Transverse colon (tissue), 4 donors: ENCODE measurements at regions of chr12 and their contacts with region 1.

Region 1: GRCh38 chr12:69966409-69967207 is 141.6 kb downstream of the MYRFL start:
- DNase-seq: peak; percentile 27
- H3K4me3 ChIP-seq: no peak overlapping the region
- H3K27ac ChIP-seq: no peak overlapping the region
- H3K4me1 ChIP-seq: no peaks in the 10 kb centered on the region
- H3K27me3 ChIP-seq: no peaks in the 10 kb centered on the region
- CTCF ChIP-seq: no peak
- EP300 ChIP-seq: no peak
- POLR2A ChIP-seq: no peak

Region 2: GRCh38 chr12:70052931-70053497 is 86.4 kb after region 1 on chr12:
- in situ Hi-C with region 1: no loop called
- intact Hi-C with region 1: no loop called
- DNase-seq: peak; percentile 59
- H3K4me3 ChIP-seq: no peak overlapping the region
- H3K27ac ChIP-seq: peak overlapping the region in 3 of 4 donors; percentile 16 to 23 (median 18)
- H3K4me1 ChIP-seq: peaks cover 0 to 37% (median 14%) of the 10 kb centered on the region in 4 donors
- H3K27me3 ChIP-seq: no peaks in the 10 kb centered on the region
- CTCF ChIP-seq: no peak
- EP300 ChIP-seq: no peak
- POLR2A ChIP-seq: no peak

Region 3: DNA sequence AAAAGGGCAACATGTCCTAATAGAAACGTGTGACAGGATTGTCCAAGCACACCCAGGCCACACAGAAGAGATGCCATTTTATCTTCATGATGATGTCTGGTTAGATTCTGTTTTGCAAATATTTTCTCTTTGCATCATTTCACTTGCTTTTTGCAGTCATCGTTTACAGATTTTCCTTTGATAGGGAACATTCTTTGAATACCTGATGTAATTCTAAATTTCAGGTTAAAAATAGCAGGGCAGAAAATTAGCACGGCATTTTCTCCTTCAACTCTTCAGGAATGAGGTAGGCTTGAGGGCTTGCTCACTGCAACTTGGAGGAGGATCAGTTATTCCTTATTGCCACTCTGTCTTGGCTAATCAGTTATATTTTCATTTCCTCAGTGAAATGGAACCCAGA is 550.6 kb after region 1 on chr12:
- in situ Hi-C with region 1: no loop called
- intact Hi-C with region 1: loop called (anchors 10 kb)
- DNase-seq: no peak
- H3K4me3 ChIP-seq: no peak overlapping the region
- H3K27ac ChIP-seq: no peak overlapping the region
- H3K4me1 ChIP-seq: no peaks in the 10 kb centered on the region
- H3K27me3 ChIP-seq: no peaks in the 10 kb centered on the region
- CTCF ChIP-seq: no peak
- EP300 ChIP-seq: no peak
- POLR2A ChIP-seq: no peak